Activated T-helper 2 cell treated with anti-CD3 and anti-CD28 coated beads, Interferon-gamma antibody, Interleukin-2, Interleukin-4, amounts not matched to agents 10 μg/mL and 5 μg/mL and 100 μg/mL, durations not matched to agents 14 hours and 24 hours and 36 hours (primary cell): ENCODE measurements at regions of chr16 and their contacts with region 1.

Region 1: DNA sequence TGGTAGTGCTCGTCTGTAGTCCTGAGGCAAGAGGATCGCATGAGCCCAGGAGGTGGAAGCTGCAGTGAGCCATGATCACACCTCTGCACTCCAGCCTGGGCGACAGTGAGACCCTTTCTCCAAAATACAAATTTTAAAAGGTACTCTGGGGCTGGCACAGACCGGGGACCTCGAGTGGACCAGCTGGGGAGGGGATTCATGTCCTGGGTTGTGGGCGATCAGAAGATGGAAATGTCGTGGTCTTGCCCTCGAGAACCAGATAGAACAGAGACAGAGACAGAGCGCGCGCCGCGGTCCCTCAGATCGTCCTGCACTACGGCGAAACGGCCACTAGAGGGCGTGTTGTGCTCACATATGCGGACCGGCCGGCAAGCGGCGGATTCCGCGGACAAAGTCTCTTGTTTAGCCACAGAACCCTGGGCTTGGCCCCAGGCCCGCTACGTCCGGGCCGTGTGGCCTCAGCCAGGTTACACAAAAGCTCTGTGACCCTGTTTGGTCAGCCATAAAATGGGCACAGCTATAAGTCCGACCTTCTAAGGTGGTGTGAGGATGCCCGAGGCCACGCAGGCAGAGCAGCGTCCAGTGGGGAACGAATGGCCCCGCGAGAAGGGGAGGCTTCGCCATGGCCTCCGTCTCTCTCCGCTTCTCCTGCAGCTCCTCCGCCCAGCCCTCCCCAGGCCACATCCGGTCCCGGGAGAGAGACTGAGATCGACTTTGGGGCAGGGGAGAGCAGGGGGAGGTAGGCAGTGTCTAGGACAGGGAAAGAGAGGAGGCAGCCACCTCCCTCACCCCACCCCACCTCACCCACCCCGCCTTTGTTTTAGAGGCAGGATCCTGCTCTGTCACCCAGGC is 14.6 kb upstream of the SBK1 start:
- DNase-seq: peak; percentile 73
- H3K4me3 Mint-ChIP-seq: peak overlapping the region; percentile 18
- H3K27ac Mint-ChIP-seq: peak overlapping the region; percentile 38
- H3K4me1 Mint-ChIP-seq: peaks cover 26% of the 10 kb centered on the region
- H3K27me3 Mint-ChIP-seq: peaks cover 29% of the 10 kb centered on the region

Region 2: DNA sequence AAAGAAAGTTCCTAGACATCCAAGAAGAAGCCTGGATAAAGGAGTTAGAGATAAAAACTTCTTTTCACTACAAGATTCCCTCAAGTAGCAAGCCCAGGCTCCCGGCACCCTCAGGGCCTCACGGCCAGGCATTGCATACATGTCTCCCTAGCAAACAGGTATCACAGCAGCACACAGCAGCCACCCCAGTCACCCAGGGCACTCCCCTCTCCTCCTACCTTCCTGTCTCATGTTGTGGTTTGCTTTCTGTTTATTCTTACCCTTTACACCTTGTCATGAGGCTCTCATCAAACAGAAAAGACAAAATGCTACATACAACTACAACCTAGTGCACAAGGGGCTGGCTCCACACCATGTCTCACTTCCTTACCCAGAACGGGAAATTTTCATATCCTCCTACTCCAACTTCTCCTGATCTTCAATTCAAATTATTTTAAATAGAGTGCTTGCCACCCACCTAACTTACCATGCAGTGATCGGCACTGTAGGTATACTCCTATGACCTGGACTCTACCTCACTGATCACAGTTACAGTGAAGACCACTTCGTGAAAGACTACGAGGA is 108.7 kb before region 1 on chr16:
- intact Hi-C with region 1: no loop called
- DNase-seq: no peak
- H3K4me3 Mint-ChIP-seq: no peak overlapping the region
- H3K27ac Mint-ChIP-seq: peak overlapping the region; percentile 59
- H3K4me1 Mint-ChIP-seq: peaks cover 55% of the 10 kb centered on the region
- H3K27me3 Mint-ChIP-seq: no peaks in the 10 kb centered on the region

Region 3: GRCh38 chr16:28264656-28265055 is 13.1 kb before region 1 on chr16:
- intact Hi-C with region 1: no loop called
- DNase-seq: no peak
- H3K4me3 Mint-ChIP-seq: no peak overlapping the region
- H3K27ac Mint-ChIP-seq: no peak overlapping the region
- H3K4me1 Mint-ChIP-seq: peaks cover 1% of the 10 kb centered on the region
- H3K27me3 Mint-ChIP-seq: peaks cover 20% of the 10 kb centered on the region

Region 4: DNA sequence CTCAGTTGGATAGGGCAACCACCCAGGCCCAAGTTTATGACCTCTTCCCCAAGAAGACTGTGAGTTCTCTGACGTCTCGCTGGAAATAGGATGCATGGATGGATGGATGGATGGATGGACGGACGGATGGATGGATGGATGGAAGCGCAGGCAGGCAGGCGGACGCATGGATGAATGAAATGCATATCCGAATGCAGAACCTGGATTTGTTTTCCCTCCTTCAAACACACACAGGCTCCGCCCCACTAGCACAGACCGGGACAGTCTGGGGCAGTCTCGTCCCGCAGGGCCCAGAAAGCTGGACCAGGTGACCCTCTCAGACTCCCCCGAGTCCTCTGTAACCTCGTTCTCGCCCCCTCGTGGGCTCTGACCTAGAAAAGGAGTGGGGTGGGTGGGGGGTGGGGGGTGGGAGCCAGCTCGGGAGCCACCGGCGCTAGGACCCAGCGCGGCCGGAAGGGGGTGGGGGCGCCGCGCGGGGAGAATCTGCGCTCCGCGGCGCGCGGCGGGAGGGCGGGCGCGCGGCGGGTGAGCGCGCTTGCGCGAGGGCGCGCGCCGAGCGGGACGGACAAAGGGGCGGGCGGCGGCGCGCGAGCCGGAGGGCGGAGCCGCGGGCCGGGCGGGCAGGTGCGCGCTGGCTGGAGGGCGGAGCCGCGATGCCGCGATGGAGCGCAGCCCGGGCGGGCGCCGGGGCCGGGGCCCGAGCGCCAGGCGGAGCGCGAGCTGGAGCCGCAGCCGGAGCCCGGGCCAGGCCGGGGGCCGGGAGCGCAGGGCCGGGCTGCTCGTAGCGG is 14.3 kb after region 1 on chr16 and contains the start of gene SBK1:
- intact Hi-C with region 1: no loop called
- DNase-seq: peak; percentile 81
- H3K4me3 Mint-ChIP-seq: peak within 1 kb of the TSS; percentile 76
- H3K27ac Mint-ChIP-seq: peak within 1 kb of the TSS; percentile 62
- H3K4me1 Mint-ChIP-seq: peaks cover 31% of the 10 kb centered on the region
- H3K27me3 Mint-ChIP-seq: peaks cover 22% of the 10 kb centered on the region
- total RNA-seq, gene SBK1: 1.3 and 1.4 TPM in 2 replicates

Region 5: DNA sequence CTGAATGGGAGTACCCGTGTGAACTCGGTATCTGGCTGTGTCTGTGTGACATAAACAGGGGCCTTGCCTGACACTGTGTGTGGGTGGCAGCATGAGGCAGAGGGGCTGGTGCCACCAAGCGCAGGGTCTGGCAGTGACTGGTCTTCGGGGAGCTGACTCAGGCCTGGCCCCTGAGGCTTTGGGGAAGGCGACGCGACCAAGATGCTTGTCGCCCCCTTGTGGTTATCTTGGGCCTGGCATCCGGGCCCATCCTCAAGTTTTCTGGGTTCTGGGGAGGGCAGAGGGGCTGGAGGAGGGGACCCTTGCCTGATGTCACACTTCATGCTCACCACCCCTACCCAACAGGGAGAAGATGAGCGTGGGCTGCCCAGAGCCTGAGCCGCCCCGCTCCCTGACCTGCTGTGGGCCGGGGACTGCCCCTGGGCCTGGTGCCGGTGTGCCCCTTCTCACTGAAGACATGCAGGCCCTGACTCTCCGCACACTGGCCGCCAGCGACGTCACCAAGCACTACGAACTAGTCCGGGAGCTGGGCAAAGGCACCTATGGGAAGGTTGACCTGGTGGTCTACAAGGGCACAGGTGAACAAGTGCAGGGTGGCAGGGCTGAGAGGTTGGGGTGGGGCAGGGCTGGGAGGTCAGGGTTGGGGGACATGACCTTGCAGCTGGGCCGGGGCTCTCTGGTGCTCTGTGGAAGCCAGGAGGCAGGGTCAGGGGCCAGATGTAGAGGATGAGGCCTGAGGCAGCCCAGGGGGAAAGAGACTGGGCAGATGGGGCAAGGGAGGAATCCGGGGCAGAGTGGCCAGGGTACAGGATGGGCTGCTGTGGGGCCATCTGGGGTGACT is 39.5 kb after region 1 on chr16:
- intact Hi-C with region 1: loop called (anchors 2 kb)
- DNase-seq: peak; percentile 56
- H3K4me3 Mint-ChIP-seq: no peak overlapping the region
- H3K27ac Mint-ChIP-seq: no peak overlapping the region
- H3K4me1 Mint-ChIP-seq: peaks cover 4% of the 10 kb centered on the region
- H3K27me3 Mint-ChIP-seq: no peaks in the 10 kb centered on the region